ENCODE measurements at regions of chr11 and their contacts with region 1.

Region 1: DNA sequence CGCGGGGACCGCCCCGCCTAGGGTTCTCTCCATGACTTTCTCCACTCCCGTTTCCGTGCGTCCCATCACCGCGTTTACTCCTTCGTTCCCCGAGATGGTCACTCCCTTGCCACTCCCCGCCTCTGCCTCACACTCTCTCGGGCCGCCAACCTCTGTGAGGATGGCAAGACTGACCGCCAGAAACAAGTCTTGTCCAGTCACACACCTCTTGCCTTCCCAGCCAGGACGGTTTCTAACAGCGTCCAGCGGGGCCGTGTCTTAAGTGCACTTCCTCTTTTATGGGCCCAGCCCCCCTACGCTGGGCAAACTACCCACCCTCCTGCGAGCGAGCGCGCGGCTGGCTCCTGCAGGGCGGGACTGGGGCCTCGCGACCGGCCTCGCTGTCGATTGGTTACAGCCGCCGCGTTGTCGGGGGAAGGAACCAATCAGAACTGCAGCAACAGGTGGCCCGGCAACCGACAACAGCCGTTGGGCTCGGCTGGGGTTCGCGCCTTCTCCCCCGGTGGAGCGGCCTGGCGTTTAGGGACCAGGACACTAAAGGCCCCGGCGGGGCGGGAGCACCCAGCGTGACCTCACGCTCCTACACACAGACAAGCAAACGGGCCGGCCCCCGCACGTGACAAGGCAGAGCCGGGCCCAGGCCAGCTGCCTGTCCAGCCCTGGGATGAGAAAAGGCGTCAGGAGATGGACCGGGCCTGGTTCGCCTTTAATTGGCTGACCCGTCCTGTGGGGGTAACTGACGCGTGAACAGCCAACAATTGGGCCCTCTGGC is 512 bp upstream of the UCP2 start:
- DNase-seq: peak; percentile 97 to 99 (median 99)
- H3K4me3 ChIP-seq: peak overlapping the region; percentile 75 to 93 (median 87)
- H3K27ac ChIP-seq: peak overlapping the region; percentile 93 to 97
- H3K4me1 ChIP-seq: peaks cover 18 to 57% (median 52%) of the 10 kb centered on the region in 4 experiments
- H3K27me3 ChIP-seq: no peaks in the 10 kb centered on the region

Region 2: DNA sequence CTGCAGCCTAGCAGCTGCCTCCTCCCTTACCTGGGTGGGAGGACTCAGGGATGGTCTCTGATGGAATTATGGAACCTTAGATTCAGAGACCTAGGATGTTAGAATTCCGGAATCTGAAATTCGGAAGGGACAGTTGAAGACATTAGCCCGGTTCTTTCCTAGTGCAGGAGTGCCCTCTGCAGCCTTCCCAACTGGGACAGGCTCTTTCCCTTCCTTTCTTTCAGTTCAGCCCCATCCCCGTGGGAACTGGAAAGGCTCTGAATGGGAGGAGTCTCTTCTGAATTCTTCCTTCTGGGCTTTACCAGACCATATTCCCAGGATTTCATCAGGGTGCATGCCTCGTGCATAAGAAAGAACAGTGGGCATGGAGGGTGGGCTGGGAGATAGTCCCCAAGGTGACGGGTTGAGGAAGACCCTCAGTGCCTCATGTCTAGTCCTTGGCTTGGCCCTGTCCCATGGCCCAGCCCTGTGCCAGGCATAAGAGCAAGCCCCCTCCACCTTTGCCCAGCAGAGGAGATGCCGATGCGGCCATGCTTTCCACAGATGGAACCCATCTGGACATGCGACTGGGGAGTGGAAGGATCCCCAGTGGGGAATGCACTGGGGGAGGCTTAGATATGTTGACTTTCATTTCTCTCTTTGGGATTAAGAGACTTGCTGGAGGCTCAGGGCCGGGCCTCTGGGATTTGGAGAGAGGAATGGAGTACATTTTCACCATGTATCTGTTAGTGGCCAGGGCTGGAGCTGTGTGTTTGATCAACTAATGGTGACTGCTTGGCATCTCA is 17.9 kb before region 1 on chr11:
- CTCF ChIA-PET with region 1: interaction called, 15 read pairs
- POLR2A ChIA-PET with region 1: interaction called, 13 read pairs
- DNase-seq: no peak
- H3K4me3 ChIP-seq: no peak overlapping the region
- H3K27ac ChIP-seq: no peak overlapping the region
- H3K4me1 ChIP-seq: peaks cover 0 to 7% (median 1%) of the 10 kb centered on the region in 4 experiments
- H3K27me3 ChIP-seq: peaks cover 0 to 6% (median 0%) of the 10 kb centered on the region in 5 experiments

Region 3: GRCh38 chr11:73995247-73995646 is 12.1 kb after region 1 on chr11:
- CTCF ChIA-PET with region 1: interaction called, 7 read pairs
- POLR2A ChIA-PET with region 1: interaction called, 14 read pairs
- DNase-seq: peak; percentile 70 to 94 (median 91)
- H3K4me3 ChIP-seq: no peak overlapping the region
- H3K27ac ChIP-seq: peak overlapping the region; percentile 85 to 90
- H3K4me1 ChIP-seq: peaks cover 4 to 19% (median 10%) of the 10 kb centered on the region in 4 experiments
- H3K27me3 ChIP-seq: no peaks in the 10 kb centered on the region

Region 4: DNA sequence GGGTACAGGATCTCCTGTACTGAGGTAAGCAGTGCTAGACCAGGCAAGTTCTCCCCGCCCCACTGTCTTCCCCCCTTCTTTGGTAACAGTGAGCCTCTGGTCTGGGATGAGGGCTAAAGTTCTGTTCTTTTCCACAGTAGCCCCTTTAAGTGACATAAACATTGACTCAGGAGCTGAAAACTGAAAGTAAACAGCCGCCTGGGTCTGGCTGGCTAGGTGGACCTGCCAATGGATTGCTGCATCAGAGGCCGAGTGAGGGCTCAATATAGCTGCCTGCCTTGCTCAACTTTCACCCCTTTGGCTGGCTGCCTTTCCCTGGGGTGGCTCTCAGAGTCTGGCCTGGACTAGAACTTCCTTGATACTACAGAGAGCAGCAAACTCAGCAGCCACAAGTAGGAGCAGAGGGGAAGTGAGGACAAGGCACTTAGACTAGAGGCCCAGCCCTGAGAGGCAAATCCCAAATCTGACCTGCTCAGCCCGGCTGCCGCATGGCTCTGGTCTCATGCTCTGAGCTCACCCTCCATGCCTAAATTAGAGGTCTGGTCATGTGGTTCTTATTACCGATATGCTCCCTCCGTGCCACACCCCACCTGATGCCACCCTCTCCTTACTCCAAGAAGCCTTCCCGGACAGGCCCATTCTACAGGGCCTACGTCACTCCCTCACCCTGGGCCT is 35.3 kb after region 1 on chr11:
- CTCF ChIA-PET with region 1: interaction called, 10 read pairs
- POLR2A ChIA-PET with region 1: no interaction called
- DNase-seq: peak in 2 of 3 donors; percentile 36 to 48
- H3K4me3 ChIP-seq: no peak overlapping the region
- H3K27ac ChIP-seq: peak overlapping the region in 1 of 2 experiments; percentile 67
- H3K4me1 ChIP-seq: peaks cover 4 to 59% (median 54%) of the 10 kb centered on the region in 4 experiments
- H3K27me3 ChIP-seq: no peaks in the 10 kb centered on the region

Measured in common myeloid progenitor, CD34-positive (primary cell).